ENCODE measurements at regions of chr12 and their contacts with region 1.

Region 1: DNA sequence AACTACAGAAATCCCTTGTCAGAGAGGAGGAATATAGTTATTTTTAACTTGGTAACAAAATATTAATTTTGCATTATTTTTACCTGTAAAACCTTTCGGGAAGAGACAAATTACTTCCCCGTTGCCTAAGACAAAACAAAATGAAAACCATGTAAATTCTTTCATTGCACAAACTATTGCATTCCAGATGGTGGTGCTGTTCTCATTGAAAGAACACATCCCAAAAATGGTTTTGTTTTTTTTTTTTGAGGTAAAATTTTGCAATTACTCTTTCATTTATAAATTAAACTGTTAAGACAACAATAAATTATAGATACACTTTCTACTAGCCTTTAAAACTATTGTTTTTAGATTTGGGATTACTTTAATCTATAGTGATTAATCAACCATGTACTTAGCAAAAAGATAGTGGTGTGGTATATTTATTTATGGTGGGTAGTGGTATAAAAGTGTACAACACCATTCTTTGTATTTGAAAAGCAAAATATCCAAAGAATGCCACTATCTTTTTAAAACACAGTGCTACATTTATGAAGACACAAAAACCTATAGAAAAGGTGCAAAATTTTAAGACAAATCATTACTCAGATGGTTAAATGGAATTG is 115.5 kb downstream of the SLC38A1 start:
- DNase-seq: peak in 2 of 9 experiments; percentile 40 to 65
- ATAC-seq: no peak
- H3K4me3 ChIP-seq: no peak overlapping the region
- H3K4me3 Mint-ChIP-seq: no peak overlapping the region
- H3K27ac ChIP-seq: no peak overlapping the region
- H3K27ac Mint-ChIP-seq: no peak overlapping the region
- H3K4me1 ChIP-seq: peaks cover 13% of the 10 kb centered on the region
- H3K4me1 Mint-ChIP-seq: peaks cover 19% of the 10 kb centered on the region
- H3K27me3 ChIP-seq: no peaks in the 10 kb centered on the region
- H3K27me3 Mint-ChIP-seq: peaks cover 1% of the 10 kb centered on the region
- CTCF ChIP-seq: peak; percentile 97

Region 2: GRCh38 chr12:47021298-47021697 is 867.9 kb after region 1 on chr12:
- CTCF ChIA-PET with region 1: no interaction called
- POLR2A ChIA-PET with region 1: no interaction called
- intact Hi-C with region 1: loop called (anchors 2 to 10 kb)
- DNase-seq: peak in 3 of 9 experiments; percentile 11 to 70 (median 58)
- ATAC-seq: no peak
- H3K4me3 ChIP-seq: no peak overlapping the region
- H3K4me3 Mint-ChIP-seq: no peak overlapping the region
- H3K27ac ChIP-seq: no peak overlapping the region
- H3K27ac Mint-ChIP-seq: no peak overlapping the region
- H3K4me1 ChIP-seq: no peaks in the 10 kb centered on the region
- H3K4me1 Mint-ChIP-seq: no peaks in the 10 kb centered on the region
- H3K27me3 ChIP-seq: no peaks in the 10 kb centered on the region
- H3K27me3 Mint-ChIP-seq: peaks cover 16% of the 10 kb centered on the region
- CTCF ChIP-seq: peak; percentile 75